Panc1 (cell line): ENCODE measurements at regions of chr13 and their contacts with region 1.

Region 1: DNA sequence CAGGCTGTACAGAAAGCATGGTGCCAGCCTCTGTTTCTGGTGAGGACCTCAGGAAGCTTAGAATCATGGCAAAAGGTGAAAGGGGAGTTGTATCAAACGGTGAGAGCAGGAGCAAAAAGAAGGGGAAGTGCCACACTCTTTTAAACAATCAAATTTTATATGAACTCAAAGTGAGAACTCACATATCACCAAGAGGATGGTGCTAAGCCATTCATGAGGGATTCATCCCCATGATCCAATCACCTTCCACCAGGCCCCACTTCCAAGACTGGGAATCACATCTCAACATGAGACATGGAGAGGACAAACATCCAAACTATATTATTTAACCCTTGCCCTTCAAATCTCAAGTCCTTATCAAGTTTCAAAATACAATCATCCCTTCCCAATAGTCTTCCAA is 836.7 kb downstream of the SLITRK5 start:
- DNase-seq: no peak
- ATAC-seq: no peak
- H3K4me3 ChIP-seq: no peak overlapping the region
- H3K27ac ChIP-seq: no peak overlapping the region
- H3K4me1 ChIP-seq: no peaks in the 10 kb centered on the region
- H3K27me3 ChIP-seq: no peaks in the 10 kb centered on the region
- CTCF ChIP-seq: no peak

Region 2: DNA sequence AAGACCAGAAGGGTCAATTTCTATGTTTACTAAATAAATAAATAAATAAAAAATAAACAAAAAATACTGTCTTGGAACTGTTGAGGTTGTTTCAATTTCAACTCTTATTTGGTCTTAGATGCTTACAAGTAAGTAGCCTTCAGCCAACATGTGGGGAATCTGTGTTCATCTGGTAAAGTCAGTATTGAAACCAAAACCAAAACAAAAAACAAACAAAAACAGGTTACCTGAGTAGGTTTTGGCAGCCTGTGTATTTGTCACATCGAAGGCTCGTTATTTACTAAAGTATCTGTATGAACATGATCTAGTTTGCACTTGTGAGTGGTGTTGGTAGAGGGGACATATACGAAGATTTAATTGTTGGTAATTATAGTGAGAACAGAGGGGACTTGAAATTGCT is 365.3 kb before region 1 on chr13:
- CTCF ChIA-PET with region 1: no interaction called
- POLR2A ChIA-PET with region 1: interaction called, 15 read pairs
- in situ Hi-C with region 1: no loop called
- intact Hi-C with region 1: no loop called
- DNase-seq: no peak
- ATAC-seq: no peak
- H3K4me3 ChIP-seq: no peak overlapping the region
- H3K27ac ChIP-seq: no peak overlapping the region
- H3K4me1 ChIP-seq: no peaks in the 10 kb centered on the region
- H3K27me3 ChIP-seq: no peaks in the 10 kb centered on the region
- CTCF ChIP-seq: no peak